ENCODE measurements at regions of chr2 and their contacts with region 1.

Region 1: GRCh38 chr2:228681426-228681825 is 499.9 kb upstream of the SPHKAP start:
- DNase-seq: no peak
- H3K4me3 ChIP-seq: no peak overlapping the region
- H3K27ac ChIP-seq: no peak overlapping the region
- H3K4me1 ChIP-seq: no peaks in the 10 kb centered on the region
- H3K27me3 ChIP-seq: no peaks in the 10 kb centered on the region
- CTCF ChIP-seq: peak; percentile 36

Region 2: GRCh38 chr2:229586746-229587705 is 905.6 kb after region 1 on chr2:
- intact Hi-C with region 1: loop called (anchors 10 kb)
- DNase-seq: peak; percentile 72
- H3K4me3 ChIP-seq: no peak overlapping the region
- H3K27ac ChIP-seq: no peak overlapping the region
- H3K4me1 ChIP-seq: no peaks in the 10 kb centered on the region
- H3K27me3 ChIP-seq: no peaks in the 10 kb centered on the region
- CTCF ChIP-seq: peak; percentile 68

Measured in colonic mucosa (tissue), 4 donors.